ENCODE measurements at regions of chr9 and their contacts with region 1.

Region 1: GRCh38 chr9:108963459-108964143 is 29.4 kb downstream of the ABITRAM start:
- DNase-seq: peak in 1 of 2 donors; percentile 23
- ATAC-seq: peak in 7 of 8 donors; percentile 44 to 78 (median 68)
- H3K4me3 ChIP-seq: no peak overlapping the region
- H3K27ac ChIP-seq: peak overlapping the region in 8 of 10 donors; percentile 16 to 69 (median 46)
- H3K4me1 ChIP-seq: peaks cover 0 to 54% (median 22%) of the 10 kb centered on the region in 9 donors
- H3K27me3 ChIP-seq: no peaks in the 10 kb centered on the region
- CTCF ChIP-seq: no peak

Region 2: DNA sequence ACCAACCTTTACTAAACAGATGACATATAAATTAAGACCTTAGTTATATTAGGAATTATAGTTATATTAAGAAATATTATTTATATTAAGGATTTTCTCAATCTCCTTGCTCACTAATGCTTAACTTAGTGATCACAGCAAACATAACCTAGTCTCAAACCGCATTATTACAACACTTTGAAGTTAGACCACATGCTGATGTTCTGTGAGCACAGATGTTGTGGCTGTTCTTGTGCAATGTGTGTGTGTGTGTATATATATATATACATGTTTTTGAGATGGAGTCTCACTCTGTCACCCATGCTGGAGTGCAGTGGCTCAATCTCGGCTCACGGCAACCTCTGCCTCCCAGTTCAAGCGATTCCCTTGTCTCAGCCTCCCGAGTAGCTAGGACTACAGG is 50.2 kb before region 1 on chr9:
- intact Hi-C with region 1: loop called in 1 of 10 experiments (anchors 10 kb)
- DNase-seq: no peak
- ATAC-seq: no peak
- H3K4me3 ChIP-seq: no peak overlapping the region
- H3K27ac ChIP-seq: no peak overlapping the region
- H3K4me1 ChIP-seq: no peaks in the 10 kb centered on the region
- H3K27me3 ChIP-seq: no peaks in the 10 kb centered on the region
- CTCF ChIP-seq: no peak

Measured in heart right ventricle (tissue), 16 donors.